Heart right ventricle (tissue), 16 donors: ENCODE measurements at regions of chr12 and their contacts with region 1.

Region 1: GRCh38 chr12:112258926-112259325 is 123.3 kb downstream of the HECTD4 start:
- DNase-seq: no peak
- ATAC-seq: no peak
- H3K4me3 ChIP-seq: no peak overlapping the region
- H3K27ac ChIP-seq: no peak overlapping the region
- H3K4me1 ChIP-seq: no peaks in the 10 kb centered on the region
- H3K27me3 ChIP-seq: no peaks in the 10 kb centered on the region
- CTCF ChIP-seq: no peak

Region 2: DNA sequence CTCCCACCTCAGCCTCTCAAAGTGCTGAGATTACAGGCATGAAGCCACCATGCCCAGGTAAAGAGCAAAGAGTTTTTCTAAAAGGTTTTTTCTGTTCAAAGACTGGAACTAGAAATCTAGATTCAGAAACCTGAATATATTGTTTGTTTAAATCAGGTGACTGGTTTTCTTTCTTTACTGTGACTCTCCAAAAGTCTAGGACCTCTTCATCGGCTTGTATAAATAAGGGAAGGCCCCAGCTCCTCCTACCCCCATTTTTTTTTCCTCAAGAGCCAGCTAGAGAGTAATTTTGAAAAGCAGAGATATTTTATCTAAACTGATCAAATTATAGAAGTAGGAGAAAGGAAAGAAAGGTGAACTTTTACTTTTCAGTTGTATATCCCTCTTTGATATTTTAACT is 294.0 kb before region 1 on chr12:
- intact Hi-C with region 1: loop called in 1 of 10 experiments (anchors 5 kb)
- DNase-seq: no peak
- ATAC-seq: no peak
- H3K4me3 ChIP-seq: no peak overlapping the region
- H3K27ac ChIP-seq: no peak overlapping the region
- H3K4me1 ChIP-seq: no peaks in the 10 kb centered on the region
- H3K27me3 ChIP-seq: no peaks in the 10 kb centered on the region
- CTCF ChIP-seq: no peak